AG04449 (cell line): ENCODE measurements at regions of chr18 and their contacts with region 1.

Region 1: GRCh38 chr18:5057386-5058348 is 139.4 kb downstream of the AKAIN1 start:
- DNase-seq: peak; percentile 5
- H3K4me3 ChIP-seq: no peak overlapping the region
- CTCF ChIP-seq: peak; percentile 58

Region 2: DNA sequence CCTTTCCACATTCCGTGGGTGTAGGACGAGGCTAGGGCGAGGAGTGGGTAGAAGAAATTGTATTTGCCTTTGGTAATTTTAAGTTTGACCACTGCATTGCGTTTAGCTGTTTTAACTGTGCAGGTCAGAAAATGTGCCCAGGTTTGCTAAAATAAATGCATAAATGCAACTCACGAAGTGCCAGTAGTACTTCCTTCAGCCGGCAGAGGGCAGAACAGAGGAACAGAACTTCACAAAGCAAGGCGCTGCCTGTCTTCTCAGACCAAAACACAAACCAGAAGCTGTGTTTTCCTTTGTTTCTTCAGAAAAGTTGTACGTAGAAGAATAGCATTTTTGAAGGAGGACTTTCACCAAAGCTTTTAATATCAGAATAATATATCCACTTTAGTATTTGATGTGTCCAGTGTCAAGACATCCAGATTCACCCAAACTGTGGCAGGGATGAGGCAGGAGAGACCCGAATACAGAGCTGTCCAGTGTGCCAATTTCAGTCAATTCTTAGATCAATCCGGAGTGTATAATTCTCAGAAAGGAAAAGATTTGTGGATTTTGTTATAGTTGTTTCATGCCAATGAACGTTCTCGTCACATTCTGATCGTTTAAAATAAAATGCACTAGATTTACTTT is 951.1 kb before region 1 on chr18:
- CTCF ChIA-PET with region 1: interaction called, 42 read pairs
- POLR2A ChIA-PET with region 1: no interaction called
- DNase-seq: no peak
- H3K4me3 ChIP-seq: no peak overlapping the region
- CTCF ChIP-seq: peak; percentile 72

Region 3: GRCh38 chr18:4587204-4587603 is 470.5 kb before region 1 on chr18:
- CTCF ChIA-PET with region 1: no interaction called
- POLR2A ChIA-PET with region 1: no interaction called
- DNase-seq: no peak
- H3K4me3 ChIP-seq: no peak overlapping the region
- CTCF ChIP-seq: no peak

Region 4: GRCh38 chr18:4888251-4889040 is 169.2 kb before region 1 on chr18:
- CTCF ChIA-PET with region 1: no interaction called
- POLR2A ChIA-PET with region 1: no interaction called
- DNase-seq: no peak
- H3K4me3 ChIP-seq: no peak overlapping the region
- CTCF ChIP-seq: no peak

Region 5: DNA sequence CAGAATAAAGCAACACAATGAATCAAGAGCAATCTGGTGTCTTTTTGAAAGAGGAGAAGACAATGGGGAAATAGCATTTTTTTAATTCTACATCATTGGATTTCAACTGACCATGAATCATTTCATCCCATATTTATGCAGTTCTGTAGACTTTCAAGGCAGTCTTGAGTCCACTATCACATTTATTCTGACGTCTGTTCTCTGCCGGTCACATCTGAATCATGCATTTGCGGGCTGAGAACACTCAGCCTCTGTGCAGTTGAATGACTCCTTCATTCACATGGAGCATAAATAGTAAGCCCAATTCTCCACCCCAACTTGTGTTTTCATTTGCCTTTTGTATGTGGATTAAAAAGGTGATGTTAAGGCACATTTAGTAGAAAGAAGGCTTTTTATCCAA is 11.2 kb after region 1 on chr18:
- CTCF ChIA-PET with region 1: interaction called, 12 read pairs
- POLR2A ChIA-PET with region 1: no interaction called
- DNase-seq: no peak
- H3K4me3 ChIP-seq: no peak overlapping the region
- CTCF ChIP-seq: no peak

Region 6: DNA sequence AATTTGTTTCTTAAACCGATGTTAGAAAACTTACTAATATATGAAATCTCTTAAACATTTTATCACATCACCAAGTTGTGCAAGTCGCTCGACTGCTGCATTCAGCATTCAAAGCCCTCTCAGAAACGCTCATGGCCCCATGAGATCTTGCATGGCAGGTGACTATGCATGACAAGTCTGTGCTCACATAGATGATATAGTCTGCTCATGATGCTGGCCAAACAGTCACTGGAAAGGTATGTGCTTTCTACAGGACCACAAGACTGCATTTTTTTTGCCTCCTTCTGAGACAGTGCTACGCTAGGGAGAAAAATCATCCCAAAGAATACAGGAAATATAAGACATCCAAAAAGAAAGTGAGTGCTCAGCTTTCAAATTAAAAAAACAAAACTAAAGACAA is 336.1 kb after region 1 on chr18:
- CTCF ChIA-PET with region 1: no interaction called
- POLR2A ChIA-PET with region 1: no interaction called
- DNase-seq: peak; percentile 10
- H3K4me3 ChIP-seq: no peak overlapping the region
- CTCF ChIP-seq: no peak